ENCODE measurements at regions of chr2 and their contacts with region 1.

Region 1: GRCh38 chr2:74198461-74199274 is at the start of gene MTHFD2:
- DNase-seq: peak; percentile 87
- ATAC-seq: peak; percentile 87
- H3K4me3 Mint-ChIP-seq: peak within 1 kb of the TSS; percentile 99
- H3K27ac Mint-ChIP-seq: peak within 1 kb of the TSS; percentile 100
- H3K4me1 Mint-ChIP-seq: peaks cover 34% of the 10 kb centered on the region
- H3K27me3 Mint-ChIP-seq: no peaks in the 10 kb centered on the region
- CTCF ChIP-seq: peak; percentile 50
- total RNA-seq, gene MTHFD2: 135 and 150 TPM in 2 replicates

Region 2: GRCh38 chr2:74119912-74120825 is 78.5 kb before region 1 on chr2:
- CTCF ChIA-PET with region 1: no interaction called
- POLR2A ChIA-PET with region 1: interaction called, 24 read pairs
- intact Hi-C with region 1: loop called (anchors 2 kb)
- DNase-seq: peak; percentile 86
- ATAC-seq: peak; percentile 95
- H3K4me3 Mint-ChIP-seq: peak overlapping the region; percentile 89
- H3K27ac Mint-ChIP-seq: peak overlapping the region; percentile 94
- H3K4me1 Mint-ChIP-seq: peaks cover 6% of the 10 kb centered on the region
- H3K27me3 Mint-ChIP-seq: peaks cover 4% of the 10 kb centered on the region
- CTCF ChIP-seq: no peak

Region 3: GRCh38 chr2:74147727-74148456 is 50.8 kb before region 1 on chr2 and contains the start of gene BOLA3:
- CTCF ChIA-PET with region 1: interaction called, 15 read pairs
- POLR2A ChIA-PET with region 1: interaction called, 24 read pairs
- intact Hi-C with region 1: loop called (anchors 1 kb)
- DNase-seq: peak; percentile 86
- ATAC-seq: peak; percentile 97
- H3K4me3 Mint-ChIP-seq: no peak within 1 kb of the TSS
- H3K27ac Mint-ChIP-seq: no peak within 1 kb of the TSS
- H3K4me1 Mint-ChIP-seq: peaks cover 7% of the 10 kb centered on the region
- H3K27me3 Mint-ChIP-seq: no peaks in the 10 kb centered on the region
- CTCF ChIP-seq: no peak
- total RNA-seq, gene BOLA3: 18.8 and 19.1 TPM in 2 replicates

Region 4: DNA sequence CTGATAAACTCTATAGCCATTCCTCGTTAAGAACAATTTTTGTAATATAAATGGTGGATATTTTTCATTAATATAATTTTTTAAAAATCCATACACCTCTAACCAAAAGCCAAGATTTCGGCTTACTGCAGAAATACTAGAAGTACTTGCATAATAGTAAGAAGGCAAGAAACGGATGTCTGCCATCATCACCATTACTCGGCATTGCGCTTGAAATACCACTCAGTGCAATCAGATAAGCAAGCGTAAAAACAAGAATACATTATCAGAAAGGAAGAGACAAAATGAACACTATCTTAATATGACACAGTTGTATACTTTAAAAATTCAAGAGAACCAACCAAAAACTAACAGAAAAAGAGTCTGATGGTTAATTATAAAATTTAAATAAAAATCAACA is 35.7 kb before region 1 on chr2:
- CTCF ChIA-PET with region 1: interaction called, 3 read pairs
- POLR2A ChIA-PET with region 1: interaction called, 28 read pairs
- intact Hi-C with region 1: no loop called
- DNase-seq: no peak
- ATAC-seq: no peak
- H3K4me3 Mint-ChIP-seq: no peak overlapping the region
- H3K27ac Mint-ChIP-seq: no peak overlapping the region
- H3K4me1 Mint-ChIP-seq: peaks cover 3% of the 10 kb centered on the region
- H3K27me3 Mint-ChIP-seq: no peaks in the 10 kb centered on the region
- CTCF ChIP-seq: no peak

Region 5: GRCh38 chr2:74168739-74169138 is 29.9 kb before region 1 on chr2:
- CTCF ChIA-PET with region 1: interaction called, 3 read pairs
- POLR2A ChIA-PET with region 1: interaction called, 723 read pairs
- intact Hi-C with region 1: no loop called
- DNase-seq: no peak
- ATAC-seq: no peak
- H3K4me3 Mint-ChIP-seq: no peak overlapping the region
- H3K27ac Mint-ChIP-seq: peak overlapping the region; percentile 48
- H3K4me1 Mint-ChIP-seq: peaks cover 23% of the 10 kb centered on the region
- H3K27me3 Mint-ChIP-seq: no peaks in the 10 kb centered on the region
- CTCF ChIP-seq: no peak

Region 6: DNA sequence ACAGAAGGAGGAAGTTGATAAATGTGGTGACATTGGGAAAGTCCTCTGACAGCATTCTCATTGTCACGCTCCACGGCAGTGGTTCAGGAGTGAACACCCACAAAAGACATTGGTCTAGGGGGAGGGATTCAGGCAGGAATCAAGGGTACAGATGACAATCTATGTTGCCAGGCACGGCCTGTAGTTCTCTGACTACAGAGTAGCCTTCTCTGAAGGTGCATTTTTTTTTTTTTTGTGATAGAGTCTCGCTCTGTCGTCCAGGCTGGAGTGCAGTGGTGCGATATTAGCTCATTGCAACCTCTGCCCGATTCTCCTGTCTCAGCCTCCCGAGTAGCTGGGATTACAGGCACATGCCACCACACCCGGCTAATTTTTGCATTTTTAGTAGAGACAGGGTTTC is 12.6 kb before region 1 on chr2:
- CTCF ChIA-PET with region 1: interaction called, 5 read pairs
- POLR2A ChIA-PET with region 1: interaction called, 723 read pairs
- intact Hi-C with region 1: loop called (anchors 1 kb)
- DNase-seq: peak; percentile 48
- ATAC-seq: peak; percentile 80
- H3K4me3 Mint-ChIP-seq: peak overlapping the region; percentile 82
- H3K27ac Mint-ChIP-seq: peak overlapping the region; percentile 99
- H3K4me1 Mint-ChIP-seq: peaks cover 52% of the 10 kb centered on the region
- H3K27me3 Mint-ChIP-seq: no peaks in the 10 kb centered on the region
- CTCF ChIP-seq: no peak

Region 7: GRCh38 chr2:74421221-74421870 is 222.7 kb after region 1 on chr2 and contains the starts of genes C2orf81 and WDR54:
- CTCF ChIA-PET with region 1: no interaction called
- POLR2A ChIA-PET with region 1: interaction called, 3 read pairs
- intact Hi-C with region 1: loop called (anchors 5 kb)
- DNase-seq: peak; percentile 97
- ATAC-seq: peak; percentile 88
- H3K4me3 Mint-ChIP-seq: peak within 1 kb of the TSS; percentile 99
- H3K27ac Mint-ChIP-seq: peak within 1 kb of the TSS; percentile 96
- H3K4me1 Mint-ChIP-seq: peaks cover 44% of the 10 kb centered on the region
- H3K27me3 Mint-ChIP-seq: no peaks in the 10 kb centered on the region
- CTCF ChIP-seq: no peak
- total RNA-seq, gene C2orf81: 3.9 and 5.5 TPM in 2 replicates
- total RNA-seq, gene WDR54: 32.3 and 33.5 TPM in 2 replicates